IMR-90 (cell line): ENCODE measurements at regions of chr9 and their contacts with region 1.

Region 1: GRCh38 chr9:111056538-111056937 is 18.3 kb upstream of the LPAR1 start:
- DNase-seq: peak; percentile 80
- ATAC-seq: peak; percentile 40; the same call in 1 of the 2 replicates
- H3K4me3 ChIP-seq: no peak overlapping the region
- H3K27ac ChIP-seq: no peak overlapping the region
- H3K4me1 ChIP-seq: peaks cover 2% of the 10 kb centered on the region; the same call in 1 of the 2 replicates
- H3K27me3 ChIP-seq: no peaks in the 10 kb centered on the region
- CTCF ChIP-seq: no peak
- POLR2A ChIP-seq: no peak
- RAD21 ChIP-seq: no peak

Region 2: DNA sequence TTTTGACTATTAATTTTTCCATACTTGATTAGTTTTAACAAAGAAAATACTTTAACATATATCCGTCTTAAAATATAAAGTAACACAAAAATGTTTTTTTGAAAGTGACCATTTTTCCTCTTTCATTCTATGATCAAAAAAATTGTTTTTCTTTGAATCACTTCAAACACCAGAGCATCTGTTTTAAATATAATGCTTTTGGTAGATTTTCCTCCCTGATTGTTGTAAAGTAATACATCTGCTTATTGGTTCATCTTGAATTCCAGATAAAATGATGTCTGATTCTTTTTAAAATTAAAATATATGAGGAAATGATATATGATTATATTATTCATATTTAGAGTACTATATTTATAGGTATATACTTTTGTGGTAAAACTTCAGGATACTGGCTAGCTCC is 57.9 kb after region 1 on chr9:
- CTCF ChIA-PET with region 1: no interaction called
- POLR2A ChIA-PET with region 1: no interaction called
- dilution Hi-C with region 1: no loop called
- in situ Hi-C with region 1: no loop called
- intact Hi-C with region 1: loop called (anchors 5 kb)
- DNase-seq: no peak
- ATAC-seq: no peak
- H3K4me3 ChIP-seq: no peak overlapping the region
- H3K27ac ChIP-seq: no peak overlapping the region
- H3K4me1 ChIP-seq: peaks cover 5% of the 10 kb centered on the region; the same call in 1 of the 2 replicates
- H3K27me3 ChIP-seq: no peaks in the 10 kb centered on the region
- CTCF ChIP-seq: no peak
- POLR2A ChIP-seq: no peak
- RAD21 ChIP-seq: no peak